ENCODE measurements at regions of chr14 and their contacts with region 1.

Region 1: GRCh38 chr14:96275177-96276112 is 19.4 kb downstream of the BDKRB1 start:
- DNase-seq: peak; percentile 56 to 68 (median 62)
- H3K4me3 ChIP-seq: no peak overlapping the region
- H3K27ac ChIP-seq: no peak overlapping the region
- H3K4me1 ChIP-seq: no peaks in the 10 kb centered on the region
- H3K27me3 ChIP-seq: peaks cover 0 to 3% (median 0%) of the 10 kb centered on the region in 5 experiments

Region 2: GRCh38 chr14:96100161-96101029 is 175.1 kb before region 1 on chr14:
- CTCF ChIA-PET with region 1: interaction called, 45 read pairs
- POLR2A ChIA-PET with region 1: no interaction called
- DNase-seq: peak; percentile 74 to 86 (median 79)
- H3K4me3 ChIP-seq: no peak overlapping the region
- H3K27ac ChIP-seq: no peak overlapping the region
- H3K4me1 ChIP-seq: no peaks in the 10 kb centered on the region
- H3K27me3 ChIP-seq: peaks cover 0 to 4% (median 0%) of the 10 kb centered on the region in 5 experiments

Region 3: DNA sequence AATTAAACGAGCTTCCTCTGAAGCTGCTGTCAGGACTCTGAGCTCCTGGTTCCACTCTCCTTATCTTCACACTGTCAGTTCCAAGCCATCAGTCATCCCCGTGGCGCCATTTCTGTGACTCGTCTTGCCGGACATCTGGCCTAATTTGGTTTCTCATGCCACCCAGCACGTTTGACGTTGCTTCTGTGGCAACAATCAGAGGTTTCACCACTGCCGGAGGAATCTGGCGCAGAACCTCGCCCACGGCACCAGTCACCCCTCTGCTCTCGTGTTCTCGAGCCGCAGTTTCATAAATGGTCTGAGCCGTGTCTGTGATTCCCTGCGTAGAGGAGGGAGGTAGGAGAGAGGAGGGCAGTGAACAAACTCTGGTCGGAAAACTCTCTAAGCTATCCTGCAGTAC is 10.2 kb after region 1 on chr14:
- CTCF ChIA-PET with region 1: interaction called, 12 read pairs
- POLR2A ChIA-PET with region 1: no interaction called
- DNase-seq: no peak
- H3K4me3 ChIP-seq: no peak overlapping the region
- H3K27ac ChIP-seq: no peak overlapping the region
- H3K4me1 ChIP-seq: no peaks in the 10 kb centered on the region
- H3K27me3 ChIP-seq: no peaks in the 10 kb centered on the region